Activated CD4-positive, alpha-beta T cell treated with anti-CD3 and anti-CD28 coated beads for 36 hours (primary cell): ENCODE measurements at regions of chr2 and their contacts with region 1.

Region 1: DNA sequence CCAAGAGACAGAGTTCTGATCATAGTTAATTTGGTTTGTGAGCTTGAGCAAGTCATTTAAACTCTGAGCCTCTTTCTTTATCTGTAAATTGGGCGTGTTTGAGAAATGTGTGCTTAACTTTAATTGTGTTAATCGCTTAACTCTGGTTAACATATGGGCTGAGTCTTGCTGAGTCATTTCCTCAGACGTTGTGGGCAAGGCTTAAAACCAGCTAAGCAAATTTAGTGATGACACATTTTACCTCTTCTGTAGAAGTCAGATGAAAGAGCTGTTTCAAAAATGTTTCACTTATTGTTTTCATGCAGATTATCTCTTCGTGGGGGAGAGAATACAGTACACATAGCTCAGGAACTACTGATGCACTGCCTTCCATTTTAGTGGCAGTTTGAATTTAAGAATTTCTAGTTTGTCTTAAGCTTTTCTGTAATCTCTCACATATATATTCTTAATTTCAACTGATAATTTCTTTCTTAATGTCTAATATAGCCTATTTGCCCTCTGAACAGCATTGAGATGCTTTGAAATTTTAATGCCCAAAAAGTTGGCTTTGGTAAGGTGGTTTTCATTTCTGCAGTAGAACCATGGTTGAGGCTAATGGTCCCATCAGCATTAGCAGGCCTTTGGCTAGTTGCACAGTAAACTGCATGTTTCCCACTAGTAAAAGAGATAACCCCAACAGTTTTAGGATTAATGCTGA is 34.9 kb downstream of the RAB10 start:
- DNase-seq: peak; percentile 73
- ATAC-seq: peak; percentile 96
- H3K4me3 Mint-ChIP-seq: peak overlapping the region; percentile 41
- H3K27ac Mint-ChIP-seq: peak overlapping the region; percentile 89
- H3K4me1 Mint-ChIP-seq: peaks cover 58% of the 10 kb centered on the region
- H3K27me3 Mint-ChIP-seq: no peaks in the 10 kb centered on the region

Region 2: GRCh38 chr2:26043862-26044696 is 24.7 kb before region 1 on chr2:
- CTCF ChIA-PET with region 1: no interaction called
- POLR2A ChIA-PET with region 1: interaction called, 3 read pairs
- intact Hi-C with region 1: loop called in 1 of 2 experiments (anchors 2 kb)
- DNase-seq: peak; percentile 34
- ATAC-seq: peak; percentile 85
- H3K4me3 Mint-ChIP-seq: peak overlapping the region; percentile 17
- H3K27ac Mint-ChIP-seq: peak overlapping the region; percentile 40
- H3K4me1 Mint-ChIP-seq: peaks cover 50% of the 10 kb centered on the region
- H3K27me3 Mint-ChIP-seq: no peaks in the 10 kb centered on the region